ENCODE measurements at regions of chr11 and their contacts with region 1.

Region 1: DNA sequence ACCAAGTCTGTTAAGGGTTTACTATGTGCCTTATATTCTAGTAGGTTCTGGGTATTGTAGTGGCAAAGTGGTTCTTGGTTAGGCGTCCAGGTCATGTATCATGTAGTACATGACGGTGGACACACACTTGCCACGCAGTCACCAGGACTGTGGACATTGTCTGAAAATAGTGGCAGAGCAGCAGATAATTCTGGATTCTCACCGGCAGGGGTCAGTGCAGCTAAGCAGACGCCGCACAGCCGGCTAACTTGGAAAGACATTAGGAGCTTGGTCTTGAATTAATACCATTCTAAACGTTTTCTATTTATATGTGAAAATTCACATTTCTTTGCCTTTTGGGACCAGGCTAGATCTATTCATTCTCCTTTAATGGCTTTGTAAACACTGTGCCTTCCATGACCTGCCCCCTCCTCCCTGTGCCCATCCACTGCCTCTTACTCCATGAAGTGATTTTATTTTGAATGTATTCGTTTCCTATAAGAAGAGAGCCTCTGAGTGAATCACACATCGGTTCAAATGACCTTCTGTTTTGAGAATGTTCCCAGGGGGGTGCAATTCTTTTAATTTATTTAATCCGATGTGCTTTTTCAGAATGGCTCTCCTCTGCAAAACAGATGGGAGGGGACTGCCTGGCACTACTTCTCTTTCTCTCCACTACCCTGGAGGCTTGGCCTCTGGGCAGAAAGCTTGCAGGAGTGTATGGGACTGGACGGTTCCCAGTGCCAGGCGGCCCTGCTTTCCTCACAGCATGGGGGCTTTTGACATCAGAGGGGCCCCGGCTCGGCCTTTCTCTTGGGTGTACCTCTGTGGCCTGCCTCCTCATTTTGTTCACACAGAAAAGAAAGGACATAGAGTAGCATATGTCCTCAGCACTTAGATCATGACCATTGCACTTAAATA is 378.0 kb downstream of the NTM start:
- H3K4me3 ChIP-seq: no peak overlapping the region
- H3K27ac ChIP-seq: no peak overlapping the region
- H3K4me1 ChIP-seq: no peaks in the 10 kb centered on the region
- CTCF ChIP-seq: no peak

Region 2: DNA sequence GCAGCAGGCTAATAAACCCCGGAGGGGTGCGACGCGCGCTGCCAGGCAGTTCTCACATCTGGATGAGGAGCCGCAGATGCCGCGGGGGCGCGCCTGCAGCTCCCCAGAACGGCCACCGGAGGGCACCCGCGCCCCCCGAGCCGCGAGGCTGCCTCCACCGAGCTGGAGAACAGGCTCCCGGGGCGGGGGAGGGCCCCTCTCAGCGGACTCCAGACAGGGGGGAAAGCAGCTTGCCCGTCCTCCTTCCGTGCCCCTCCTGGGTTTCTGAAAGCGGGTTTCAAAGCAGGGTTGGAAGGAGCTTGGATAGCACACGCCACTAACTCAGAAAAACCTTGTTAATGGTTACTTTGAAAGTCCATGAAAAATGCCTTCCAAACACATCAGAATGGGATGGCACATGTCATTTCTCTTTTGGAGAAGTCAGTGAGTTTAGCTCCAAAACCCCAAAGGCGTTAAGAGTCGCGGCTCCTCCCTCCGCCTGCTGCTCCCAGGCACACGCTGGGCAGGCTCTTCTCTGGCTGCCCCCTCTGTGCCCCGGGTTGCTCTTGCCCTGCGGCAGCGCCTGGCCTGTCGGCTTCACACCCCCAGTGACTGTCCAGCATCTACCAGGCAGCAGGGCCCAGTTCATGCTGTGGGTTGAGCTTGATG is 60.2 kb before region 1 on chr11:
- CTCF ChIA-PET with region 1: interaction called, 19 read pairs
- POLR2A ChIA-PET with region 1: no interaction called
- H3K4me3 ChIP-seq: no peak overlapping the region
- H3K27ac ChIP-seq: no peak overlapping the region
- H3K4me1 ChIP-seq: no peaks in the 10 kb centered on the region; the same call in 1 of the 2 replicates
- CTCF ChIP-seq: peak; percentile 35; the same call in 1 of the 2 replicates

Region 3: GRCh38 chr11:131763193-131763890 is 14.9 kb after region 1 on chr11:
- CTCF ChIA-PET with region 1: interaction called, 37 read pairs
- POLR2A ChIA-PET with region 1: no interaction called
- H3K4me3 ChIP-seq: no peak overlapping the region
- H3K27ac ChIP-seq: no peak overlapping the region
- H3K4me1 ChIP-seq: no peaks in the 10 kb centered on the region
- CTCF ChIP-seq: no peak

Measured in HEK293 (cell line).